ENCODE measurements at regions of chr16 and their contacts with region 1.

Region 1: GRCh38 chr16:54286090-54286993 is at the start of gene IRX3:
- DNase-seq: peak; percentile 90 to 96 (median 91)
- ATAC-seq: peak; percentile 80 to 82 (median 80)
- H3K4me3 ChIP-seq: peak within 1 kb of the TSS; percentile 62 to 94 (median 76)
- H3K27ac ChIP-seq: peak within 1 kb of the TSS; percentile 76 to 98 (median 94)
- H3K4me1 ChIP-seq: peaks cover 0 to 29% (median 12%) of the 10 kb centered on the region in 12 donors
- H3K27me3 ChIP-seq: peaks cover 0 to 98% (median 9%) of the 10 kb centered on the region in 9 donors
- CTCF ChIP-seq: no peak
- POLR2A ChIP-seq: peak in 1 of 2 donors; percentile 59
- total RNA-seq, gene IRX3: 28.6 to 101 (median 46.0) TPM

Region 2: GRCh38 chr16:53952215-53953208 is 333.8 kb before region 1 on chr16:
- intact Hi-C with region 1: loop called in 2 of 10 experiments (anchors 10 kb)
- DNase-seq: no peak
- ATAC-seq: peak in 1 of 4 donors; percentile 62
- H3K4me3 ChIP-seq: peak overlapping the region in 2 of 12 donors; percentile 3 to 12
- H3K27ac ChIP-seq: no peak overlapping the region
- H3K4me1 ChIP-seq: peaks cover 0 to 17% (median 2%) of the 10 kb centered on the region in 12 donors
- H3K27me3 ChIP-seq: no peaks in the 10 kb centered on the region
- CTCF ChIP-seq: no peak
- POLR2A ChIP-seq: no peak

Region 3: DNA sequence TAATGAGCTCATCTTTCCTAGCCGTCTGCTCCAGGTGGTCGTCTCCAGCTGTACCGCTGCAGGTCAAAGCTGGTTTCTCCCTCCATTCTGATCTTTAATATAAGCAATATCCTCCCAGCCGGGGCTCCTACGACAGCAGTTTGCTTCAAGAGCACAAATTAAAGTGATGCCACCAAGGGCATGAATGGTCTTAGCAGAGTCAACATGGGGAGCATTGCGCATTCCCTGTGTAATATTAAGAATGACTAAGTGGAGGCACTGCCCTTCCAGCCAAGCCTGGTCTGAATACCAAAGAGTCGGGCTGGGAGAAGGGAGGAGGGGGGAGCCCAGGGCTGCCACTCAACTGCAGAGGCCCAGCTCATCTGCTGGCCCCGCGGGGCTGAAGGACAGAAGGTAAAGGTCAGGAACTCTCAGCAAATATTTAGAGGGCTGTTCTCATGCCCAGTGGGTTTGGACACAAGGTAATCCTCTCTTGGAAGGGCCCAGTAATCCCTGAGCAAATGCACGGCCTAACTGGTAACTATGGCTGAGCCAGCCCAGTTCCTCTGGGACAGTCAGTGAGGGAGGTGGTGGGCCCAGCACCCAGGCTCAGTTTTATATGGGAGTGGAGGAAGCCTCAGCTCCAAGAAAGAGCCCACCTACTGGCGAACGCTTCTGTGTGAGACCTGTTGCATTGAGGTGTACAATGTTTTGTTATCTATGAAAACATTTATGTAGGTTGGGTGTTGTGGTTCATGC is 121.0 kb before region 1 on chr16:
- intact Hi-C with region 1: no loop called
- DNase-seq: no peak
- ATAC-seq: no peak
- H3K4me3 ChIP-seq: no peak overlapping the region
- H3K27ac ChIP-seq: no peak overlapping the region
- H3K4me1 ChIP-seq: no peaks in the 10 kb centered on the region
- H3K27me3 ChIP-seq: no peaks in the 10 kb centered on the region
- CTCF ChIP-seq: no peak
- POLR2A ChIP-seq: no peak

Region 4: GRCh38 chr16:54389836-54390494 is 103.6 kb after region 1 on chr16:
- intact Hi-C with region 1: no loop called
- DNase-seq: no peak
- ATAC-seq: no peak
- H3K4me3 ChIP-seq: no peak overlapping the region
- H3K27ac ChIP-seq: no peak overlapping the region
- H3K4me1 ChIP-seq: no peaks in the 10 kb centered on the region
- H3K27me3 ChIP-seq: no peaks in the 10 kb centered on the region
- CTCF ChIP-seq: no peak
- POLR2A ChIP-seq: no peak

Region 5: DNA sequence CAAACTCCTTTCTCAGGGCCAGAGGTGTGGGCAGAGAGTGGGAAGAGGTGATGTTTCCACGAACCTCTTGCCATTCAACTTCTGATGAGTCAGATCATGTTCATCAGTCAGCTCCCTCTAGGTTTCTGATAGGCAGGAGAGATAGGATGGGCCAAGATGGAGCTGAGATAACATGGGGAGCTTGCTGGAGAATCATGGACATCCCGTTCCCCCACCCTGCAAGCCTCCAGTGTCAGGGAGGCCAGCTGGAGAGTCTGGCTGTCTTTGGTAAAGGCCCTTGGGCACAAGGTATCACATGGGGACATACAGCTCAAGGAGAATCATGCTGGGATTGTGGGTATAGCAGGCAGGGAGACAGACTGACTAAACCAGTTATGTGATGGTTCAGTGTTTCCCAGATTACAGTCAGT is 136.2 kb after region 1 on chr16:
- intact Hi-C with region 1: loop called in 2 of 10 experiments (anchors 5 kb)
- DNase-seq: no peak
- ATAC-seq: peak; percentile 29 to 49 (median 38)
- H3K4me3 ChIP-seq: no peak overlapping the region
- H3K27ac ChIP-seq: peak overlapping the region in 11 of 12 donors; percentile 41 to 82 (median 79)
- H3K4me1 ChIP-seq: peaks cover 0 to 26% (median 12%) of the 10 kb centered on the region in 12 donors
- H3K27me3 ChIP-seq: no peaks in the 10 kb centered on the region
- CTCF ChIP-seq: no peak
- POLR2A ChIP-seq: no peak

Region 6: GRCh38 chr16:54657058-54657708 is 370.8 kb after region 1 on chr16:
- intact Hi-C with region 1: loop called in 1 of 10 experiments (anchors 5 kb)
- DNase-seq: peak in 1 of 5 donors; percentile 22
- ATAC-seq: peak in 2 of 4 donors; percentile 79 to 84
- H3K4me3 ChIP-seq: no peak overlapping the region
- H3K27ac ChIP-seq: no peak overlapping the region
- H3K4me1 ChIP-seq: peaks cover 0 to 35% (median 14%) of the 10 kb centered on the region in 12 donors
- H3K27me3 ChIP-seq: no peaks in the 10 kb centered on the region
- CTCF ChIP-seq: no peak
- POLR2A ChIP-seq: no peak

Region 7: GRCh38 chr16:54936979-54937670 is 650.8 kb after region 1 on chr16:
- intact Hi-C with region 1: loop called in 3 of 10 experiments (anchors 5 kb)
- DNase-seq: peak in 4 of 5 donors; percentile 48 to 69 (median 62)
- ATAC-seq: peak; percentile 25 to 74 (median 52)
- H3K4me3 ChIP-seq: peak overlapping the region; percentile 15 to 86 (median 72)
- H3K27ac ChIP-seq: peak overlapping the region; percentile 26 to 96 (median 69)
- H3K4me1 ChIP-seq: peaks cover 0 to 45% (median 22%) of the 10 kb centered on the region in 12 donors
- H3K27me3 ChIP-seq: peaks cover 12 to 98% (median 67%) of the 10 kb centered on the region in 9 donors
- CTCF ChIP-seq: peak; percentile 50 to 84 (median 66)
- POLR2A ChIP-seq: no peak

Region 8: GRCh38 chr16:55146966-55147365 is 860.6 kb after region 1 on chr16:
- intact Hi-C with region 1: no loop called
- DNase-seq: no peak
- ATAC-seq: no peak
- H3K4me3 ChIP-seq: no peak overlapping the region
- H3K27ac ChIP-seq: no peak overlapping the region
- H3K4me1 ChIP-seq: no peaks in the 10 kb centered on the region
- H3K27me3 ChIP-seq: no peaks in the 10 kb centered on the region
- CTCF ChIP-seq: no peak
- POLR2A ChIP-seq: no peak

Measured in heart left ventricle (tissue), 16 donors.